Calu3 (cell line): ENCODE measurements at regions of chr6 and their contacts with region 1.

Region 1: DNA sequence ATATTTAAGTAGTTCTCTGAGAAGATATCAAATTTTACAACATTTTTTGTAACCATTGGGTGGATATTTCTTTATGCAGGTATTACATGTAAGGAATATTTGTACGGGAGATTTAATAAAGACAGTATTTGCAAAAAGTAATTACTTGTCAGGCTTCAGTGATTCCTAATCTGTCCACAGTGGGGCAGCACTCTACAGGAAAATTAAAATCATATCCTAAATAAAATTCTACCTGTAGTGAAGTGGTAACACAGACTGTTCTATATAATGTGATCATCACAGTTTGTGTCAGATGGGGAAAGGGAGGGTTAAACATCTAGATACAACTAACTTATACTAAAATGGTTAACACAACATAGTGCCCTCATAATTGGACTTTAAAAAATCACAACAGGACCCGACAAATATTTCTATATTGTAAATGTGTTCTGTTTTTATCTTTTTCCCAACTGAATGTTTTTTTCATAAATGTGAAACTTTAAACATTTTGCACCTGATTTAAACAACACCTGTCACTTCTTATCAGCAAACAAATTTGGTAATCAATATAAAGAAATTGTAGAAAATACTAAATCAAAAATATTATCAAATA is 145.6 kb upstream of the MANEA start:
- DNase-seq: peak; percentile 57
- H3K4me3 Mint-ChIP-seq: no peak overlapping the region
- H3K27ac Mint-ChIP-seq: no peak overlapping the region
- H3K4me1 Mint-ChIP-seq: peaks cover 8% of the 10 kb centered on the region
- H3K27me3 Mint-ChIP-seq: no peaks in the 10 kb centered on the region
- CTCF ChIP-seq: peak; percentile 45

Region 2: GRCh38 chr6:95364016-95364604 is 67.6 kb before region 1 on chr6:
- CTCF ChIA-PET with region 1: no interaction called
- intact Hi-C with region 1: loop called (anchors 1 kb)
- DNase-seq: no peak
- H3K4me3 Mint-ChIP-seq: no peak overlapping the region
- H3K27ac Mint-ChIP-seq: no peak overlapping the region
- H3K4me1 Mint-ChIP-seq: peaks cover 8% of the 10 kb centered on the region
- H3K27me3 Mint-ChIP-seq: no peaks in the 10 kb centered on the region
- CTCF ChIP-seq: no peak

Region 3: GRCh38 chr6:95448208-95448607 is 16.5 kb after region 1 on chr6:
- CTCF ChIA-PET with region 1: no interaction called
- intact Hi-C with region 1: no loop called
- DNase-seq: no peak
- H3K4me3 Mint-ChIP-seq: no peak overlapping the region
- H3K27ac Mint-ChIP-seq: no peak overlapping the region
- H3K4me1 Mint-ChIP-seq: no peaks in the 10 kb centered on the region
- H3K27me3 Mint-ChIP-seq: no peaks in the 10 kb centered on the region
- CTCF ChIP-seq: no peak

Region 4: DNA sequence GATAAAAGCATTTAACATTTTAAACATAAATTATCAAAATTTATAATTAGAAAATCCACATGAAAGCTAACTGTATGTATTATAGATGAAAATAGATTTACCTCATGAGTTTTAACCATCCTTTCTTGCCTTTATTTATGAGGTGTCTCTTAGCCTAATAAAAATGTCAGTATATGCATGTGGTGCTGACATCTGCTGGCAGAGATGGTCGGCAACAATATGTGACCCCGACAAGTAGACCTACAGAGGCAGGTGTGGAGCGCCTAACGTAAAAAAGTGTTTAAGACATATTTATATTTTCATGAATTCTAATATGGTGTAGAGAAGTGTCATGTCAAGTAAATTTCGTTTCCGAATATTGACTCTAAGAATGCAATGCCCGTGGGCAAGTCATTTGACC is 435.0 kb after region 1 on chr6:
- CTCF ChIA-PET with region 1: interaction called, 4 read pairs
- intact Hi-C with region 1: loop called (anchors 1 kb)
- DNase-seq: peak; percentile 30
- H3K4me3 Mint-ChIP-seq: no peak overlapping the region
- H3K27ac Mint-ChIP-seq: no peak overlapping the region
- H3K4me1 Mint-ChIP-seq: no peaks in the 10 kb centered on the region
- H3K27me3 Mint-ChIP-seq: no peaks in the 10 kb centered on the region
- CTCF ChIP-seq: no peak

Region 5: GRCh38 chr6:96015518-96016333 is 584.0 kb after region 1 on chr6 and contains the start of gene FUT9:
- CTCF ChIA-PET with region 1: no interaction called
- intact Hi-C with region 1: loop called (anchors 5 kb)
- DNase-seq: peak; percentile 53
- H3K4me3 Mint-ChIP-seq: peak within 1 kb of the TSS; percentile 72
- H3K27ac Mint-ChIP-seq: peak within 1 kb of the TSS; percentile 60
- H3K4me1 Mint-ChIP-seq: no peaks in the 10 kb centered on the region
- H3K27me3 Mint-ChIP-seq: no peaks in the 10 kb centered on the region
- CTCF ChIP-seq: no peak
- total RNA-seq, gene FUT9: 1.9 and 2.0 TPM in 2 replicates

Region 6: GRCh38 chr6:96468681-96469224 is 1037.0 kb after region 1 on chr6:
- CTCF ChIA-PET with region 1: no interaction called
- intact Hi-C with region 1: loop called (anchors 1 kb)
- DNase-seq: no peak
- H3K4me3 Mint-ChIP-seq: no peak overlapping the region
- H3K27ac Mint-ChIP-seq: no peak overlapping the region
- H3K4me1 Mint-ChIP-seq: no peaks in the 10 kb centered on the region
- H3K27me3 Mint-ChIP-seq: no peaks in the 10 kb centered on the region
- CTCF ChIP-seq: no peak